ENCODE measurements at regions of chr7 and their contacts with region 1.

Region 1: GRCh38 chr7:117061751-117062150 is 108.5 kb downstream of the ST7 start:
- DNase-seq: no peak
- ATAC-seq: peak in 1 of 4 donors; percentile 47
- H3K4me3 ChIP-seq: no peak overlapping the region
- H3K27ac ChIP-seq: no peak overlapping the region
- H3K4me1 ChIP-seq: peaks cover 3% of the 10 kb centered on the region
- H3K27me3 ChIP-seq: no peaks in the 10 kb centered on the region
- CTCF ChIP-seq: no peak

Region 2: DNA sequence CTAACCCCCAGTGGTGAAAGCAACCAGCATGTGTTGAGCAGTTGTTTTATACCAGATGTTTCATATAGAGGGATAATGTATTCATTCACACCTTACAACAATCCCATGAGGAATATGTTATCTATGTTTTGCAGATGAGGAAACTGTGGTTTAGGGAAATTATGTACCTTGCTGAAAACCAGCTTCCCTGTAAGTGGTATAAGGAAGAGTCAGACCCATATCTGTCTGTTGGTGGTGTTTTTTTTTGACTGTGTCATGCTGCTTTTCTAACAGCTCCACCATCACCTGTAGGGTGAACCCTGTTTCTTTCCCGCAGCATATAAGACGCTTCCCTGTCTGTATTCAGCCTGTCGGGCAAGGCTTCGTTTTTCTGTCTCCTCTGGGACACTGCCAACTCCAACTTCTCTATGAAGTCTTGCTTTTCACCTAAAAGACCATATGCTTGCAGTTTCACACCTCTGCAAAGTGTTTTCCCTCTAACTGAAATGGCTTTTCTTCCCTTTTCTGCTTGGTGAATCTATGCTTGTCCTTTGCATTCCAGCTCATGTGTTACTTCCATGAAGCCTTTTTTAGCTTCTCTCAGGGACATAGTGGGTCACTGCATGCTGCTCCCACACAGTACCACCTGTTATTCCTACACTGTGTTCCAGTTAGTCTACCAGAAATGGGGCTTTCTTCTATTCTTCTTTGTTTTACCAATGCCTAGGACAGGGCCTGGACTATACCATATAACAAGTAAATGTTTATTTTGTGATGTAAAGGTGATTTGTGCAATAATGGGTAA is 15.6 kb before region 1 on chr7:
- intact Hi-C with region 1: loop called in 1 of 2 experiments (anchors 2 kb)
- DNase-seq: no peak
- ATAC-seq: peak in 1 of 4 donors; percentile 23
- H3K4me3 ChIP-seq: no peak overlapping the region
- H3K27ac ChIP-seq: no peak overlapping the region
- H3K4me1 ChIP-seq: peaks cover 48% of the 10 kb centered on the region
- H3K27me3 ChIP-seq: no peaks in the 10 kb centered on the region
- CTCF ChIP-seq: no peak